Right cardiac atrium (tissue), 5 donors: ENCODE measurements at regions of chr9 and their contacts with region 1.

Region 1: DNA sequence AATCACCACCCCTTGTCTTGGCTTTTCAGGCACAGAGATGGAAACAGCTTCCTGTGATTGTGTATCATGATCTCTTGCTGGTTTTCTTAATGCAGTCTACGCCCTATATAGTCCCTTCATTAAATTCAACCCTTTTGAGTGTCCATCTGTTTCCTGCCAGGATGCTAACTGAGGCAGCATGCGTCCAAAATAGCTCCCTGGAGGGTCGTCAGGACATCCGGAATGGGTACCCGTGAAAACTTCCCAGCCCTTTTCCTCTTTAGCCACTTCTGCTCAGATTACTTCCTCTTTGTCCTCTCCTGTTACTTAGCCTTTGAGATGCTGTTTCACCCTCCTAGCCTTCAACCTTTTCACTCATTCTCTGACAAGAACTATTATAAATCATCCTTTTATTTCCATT is 79.8 kb upstream of the KLF9 start:
- DNase-seq: no peak
- ATAC-seq: peak; percentile 20 to 28
- H3K4me3 ChIP-seq: no peak overlapping the region
- H3K27ac ChIP-seq: peak overlapping the region; percentile 64
- H3K4me1 ChIP-seq: peaks cover 24% of the 10 kb centered on the region
- H3K27me3 ChIP-seq: no peaks in the 10 kb centered on the region

Region 2: GRCh38 chr9:70581214-70581954 is 87.2 kb after region 1 on chr9:
- intact Hi-C with region 1: loop called in 2 of 4 experiments (anchors 5 kb)
- DNase-seq: no peak
- ATAC-seq: no peak
- H3K4me3 ChIP-seq: no peak overlapping the region
- H3K27ac ChIP-seq: no peak overlapping the region
- H3K4me1 ChIP-seq: peaks cover 5% of the 10 kb centered on the region
- H3K27me3 ChIP-seq: no peaks in the 10 kb centered on the region